ENCODE measurements at regions of chr20 and their contacts with region 1.

Region 1: DNA sequence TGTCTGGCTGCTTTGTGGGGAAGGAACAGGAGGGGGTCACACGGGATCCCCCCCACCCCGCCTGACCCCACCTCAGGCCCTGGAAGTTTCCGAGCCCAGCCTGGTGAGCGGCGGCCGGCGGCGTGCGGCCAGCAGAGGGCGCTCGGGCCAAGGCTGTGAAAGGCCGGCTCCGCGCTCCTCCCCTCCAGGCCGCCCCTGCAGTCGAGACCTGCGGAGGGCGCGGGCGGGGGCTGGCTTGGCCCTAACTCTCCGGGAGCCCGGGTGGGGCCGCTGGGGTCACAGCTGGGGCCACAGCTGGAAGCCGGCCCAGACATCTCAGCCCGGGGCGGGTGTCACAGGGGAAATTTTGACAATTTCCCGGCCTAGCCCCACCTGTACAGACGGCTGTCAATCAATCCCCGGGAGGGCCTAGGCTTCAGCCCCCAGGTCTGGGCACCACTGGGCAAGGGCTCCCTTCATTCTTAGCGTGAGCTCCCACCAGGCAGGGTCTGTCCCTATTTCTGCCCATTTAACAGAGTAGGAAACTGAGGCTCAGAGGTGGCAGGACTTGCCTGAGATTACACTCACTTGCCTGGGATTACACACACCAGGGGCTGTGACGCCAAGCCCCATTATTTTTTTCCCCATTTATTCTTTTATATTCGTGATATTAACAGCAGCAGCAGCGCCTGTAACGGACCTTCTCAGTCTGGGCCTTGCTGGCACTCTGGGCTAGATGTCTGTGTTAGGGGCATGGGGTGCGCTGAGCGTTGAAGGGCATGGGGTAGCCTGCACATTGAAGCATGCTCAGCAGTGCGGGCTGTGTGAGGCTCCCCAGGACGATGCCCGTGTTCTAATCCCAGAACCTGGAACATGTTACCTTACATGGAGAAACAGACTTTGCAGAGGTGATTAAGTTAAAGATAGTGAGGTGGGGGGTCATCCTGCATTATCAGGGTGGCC is 23.0 kb downstream of the ZBP1 start:
- DNase-seq: peak; percentile 81
- ATAC-seq: peak; percentile 73
- H3K4me3 Mint-ChIP-seq: no peak overlapping the region
- H3K27ac Mint-ChIP-seq: no peak overlapping the region
- H3K4me1 Mint-ChIP-seq: peaks cover 14% of the 10 kb centered on the region
- H3K27me3 Mint-ChIP-seq: no peaks in the 10 kb centered on the region
- CTCF ChIP-seq: peak; percentile 88

Region 2: GRCh38 chr20:57514273-57514751 is 83.0 kb before region 1 on chr20:
- CTCF ChIA-PET with region 1: interaction called, 53 read pairs
- POLR2A ChIA-PET with region 1: interaction called, 3 read pairs
- DNase-seq: peak; percentile 71
- ATAC-seq: peak; percentile 87
- H3K4me3 Mint-ChIP-seq: no peak overlapping the region
- H3K27ac Mint-ChIP-seq: no peak overlapping the region
- H3K4me1 Mint-ChIP-seq: peaks cover 26% of the 10 kb centered on the region
- H3K27me3 Mint-ChIP-seq: no peaks in the 10 kb centered on the region
- CTCF ChIP-seq: peak; percentile 49

Region 3: GRCh38 chr20:57921676-57922075 is 324.4 kb after region 1 on chr20:
- CTCF ChIA-PET with region 1: no interaction called
- POLR2A ChIA-PET with region 1: no interaction called
- DNase-seq: no peak
- ATAC-seq: no peak
- H3K4me3 Mint-ChIP-seq: no peak overlapping the region
- H3K27ac Mint-ChIP-seq: no peak overlapping the region
- H3K4me1 Mint-ChIP-seq: peaks cover 26% of the 10 kb centered on the region
- H3K27me3 Mint-ChIP-seq: peaks cover 9% of the 10 kb centered on the region
- CTCF ChIP-seq: no peak

Measured in WTC11 (cell line).